HAP-1 (cell line): ENCODE measurements at regions of chr17 and their contacts with region 1.

Region 1: GRCh38 chr17:29645515-29646051 is 22.9 kb upstream of the CORO6 start:
- DNase-seq: no peak
- H3K4me3 ChIP-seq: no peak overlapping the region
- H3K4me1 ChIP-seq: no peaks in the 10 kb centered on the region
- H3K27me3 ChIP-seq: no peaks in the 10 kb centered on the region

Region 2: GRCh38 chr17:29524460-29525091 is 121.0 kb before region 1 on chr17:
- in situ Hi-C with region 1: no loop called
- DNase-seq: no peak
- H3K4me3 ChIP-seq: no peak overlapping the region
- H3K4me1 ChIP-seq: no peaks in the 10 kb centered on the region
- H3K27me3 ChIP-seq: no peaks in the 10 kb centered on the region

Region 3: GRCh38 chr17:29771551-29771950 is 126.0 kb after region 1 on chr17:
- in situ Hi-C with region 1: loop called (anchors 10 kb)
- DNase-seq: no peak
- H3K4me3 ChIP-seq: no peak overlapping the region
- H3K4me1 ChIP-seq: peaks cover 9% of the 10 kb centered on the region
- H3K27me3 ChIP-seq: no peaks in the 10 kb centered on the region

Region 4: DNA sequence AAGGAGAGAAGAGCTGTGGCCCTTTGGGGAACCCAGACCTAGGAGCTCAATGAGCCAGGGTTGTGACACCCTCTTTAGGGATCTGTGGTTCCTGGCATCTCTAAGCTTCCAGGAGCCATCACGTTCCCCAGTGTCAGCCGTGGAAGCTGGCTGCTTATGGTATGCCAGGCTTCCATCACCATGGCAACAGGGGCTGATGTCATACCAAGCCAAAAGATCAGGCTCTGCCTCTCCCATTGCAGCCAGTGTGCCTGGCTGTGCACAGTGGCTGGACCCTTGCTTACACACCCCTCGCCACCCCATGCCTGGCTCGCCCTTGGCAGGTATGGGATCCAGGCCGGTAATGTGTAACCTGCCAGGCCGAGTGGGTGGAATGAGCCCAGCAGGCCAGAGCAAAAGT is 193.4 kb after region 1 on chr17:
- in situ Hi-C with region 1: no loop called
- DNase-seq: no peak
- H3K4me3 ChIP-seq: no peak overlapping the region
- H3K4me1 ChIP-seq: peaks cover 13% of the 10 kb centered on the region
- H3K27me3 ChIP-seq: no peaks in the 10 kb centered on the region

Region 5: DNA sequence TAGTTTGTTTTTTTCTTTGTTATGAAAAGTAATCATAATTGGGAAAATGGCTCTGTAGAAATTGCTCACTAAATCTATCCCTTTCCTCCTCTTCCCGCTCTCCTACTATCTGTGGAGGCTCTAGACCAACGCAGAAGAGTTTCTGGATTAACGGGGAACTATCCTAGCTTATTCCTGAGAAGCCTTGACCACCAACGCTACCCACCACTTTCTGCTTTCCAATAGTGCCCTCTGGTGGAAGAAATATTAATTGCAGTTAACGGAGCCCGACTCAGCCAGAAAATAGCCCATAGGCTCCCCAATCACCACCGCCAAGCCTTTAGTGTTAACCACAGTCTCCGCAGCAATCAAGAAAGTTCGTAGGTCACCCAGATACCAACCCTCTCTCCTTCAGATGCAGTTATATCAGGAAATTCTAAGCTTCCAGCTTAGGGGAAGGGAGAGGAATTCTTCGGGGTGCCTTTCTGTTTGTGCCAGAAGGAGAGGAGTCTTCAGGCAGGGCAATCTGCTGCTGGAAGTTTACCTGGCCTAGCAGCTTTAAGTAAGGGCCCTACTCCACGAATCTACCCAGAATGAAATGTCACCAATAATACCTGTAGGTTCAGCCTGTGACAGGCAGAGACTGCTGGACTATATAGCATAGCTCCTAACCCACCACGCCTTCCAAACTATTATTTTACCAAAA is 448.0 kb after region 1 on chr17:
- in situ Hi-C with region 1: loop called (anchors 25 kb)
- DNase-seq: peak; percentile 47 to 76
- H3K4me3 ChIP-seq: no peak overlapping the region
- H3K4me1 ChIP-seq: no peaks in the 10 kb centered on the region
- H3K27me3 ChIP-seq: 0 out of 2 replicates have a peak, but pooled peaks cover 3% of the 10 kb centered on the region

Region 6: GRCh38 chr17:30132615-30133014 is 487.0 kb after region 1 on chr17:
- in situ Hi-C with region 1: no loop called
- DNase-seq: no peak
- H3K4me3 ChIP-seq: no peak overlapping the region
- H3K4me1 ChIP-seq: peaks cover 4% of the 10 kb centered on the region; the same call in 1 of the 2 replicates
- H3K27me3 ChIP-seq: no peaks in the 10 kb centered on the region